ENCODE measurements at regions of chr3 and their contacts with region 1.

Region 1: DNA sequence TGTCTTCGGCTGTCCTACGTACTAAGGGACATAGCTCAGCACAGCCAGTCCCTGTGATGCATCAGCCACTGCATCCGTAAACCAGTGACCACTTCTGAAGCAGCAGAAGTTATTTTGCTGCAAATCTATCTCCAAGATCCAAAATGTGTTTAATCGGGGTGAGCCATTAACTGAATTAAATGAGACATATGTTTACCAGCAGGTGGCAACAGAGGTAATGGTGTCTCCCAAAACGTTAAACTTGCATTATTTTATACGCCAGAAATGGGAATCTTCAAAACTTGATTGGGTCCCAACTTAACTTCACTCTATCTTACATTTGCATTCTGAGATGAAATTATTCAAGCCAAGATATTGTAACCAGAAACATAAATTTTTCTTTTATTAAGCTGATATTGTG is 75.3 kb upstream of the BOC start:
- DNase-seq: peak; percentile 7
- H3K4me3 ChIP-seq: no peak overlapping the region
- H3K27ac ChIP-seq: no peak overlapping the region
- H3K4me1 ChIP-seq: no peaks in the 10 kb centered on the region
- H3K27me3 ChIP-seq: no peaks in the 10 kb centered on the region
- CTCF ChIP-seq: peak; percentile 54 to 77 (median 65)
- POLR2A ChIP-seq: no peak

Region 2: DNA sequence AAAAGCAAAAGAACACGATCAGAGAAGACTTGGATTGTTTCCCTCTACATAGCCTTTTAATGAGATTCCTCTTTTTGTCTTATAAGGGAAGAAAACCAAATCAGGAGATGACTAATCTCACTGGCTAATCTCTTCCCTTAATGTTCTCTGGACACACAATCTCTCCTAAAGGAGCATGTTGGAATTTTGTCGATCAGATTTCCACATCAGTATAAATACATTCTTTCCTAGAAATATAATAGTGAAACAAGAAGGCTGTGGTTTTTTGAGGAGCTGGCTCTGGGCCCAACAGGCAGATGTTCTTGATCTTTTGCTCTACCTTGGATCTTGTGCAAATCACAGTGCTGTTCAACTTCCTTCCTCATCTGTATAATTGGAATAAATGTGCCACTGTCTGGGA is 51.3 kb before region 1 on chr3:
- intact Hi-C with region 1: loop called (anchors 5 kb)
- DNase-seq: no peak
- H3K4me3 ChIP-seq: no peak overlapping the region
- H3K27ac ChIP-seq: no peak overlapping the region
- H3K4me1 ChIP-seq: no peaks in the 10 kb centered on the region
- H3K27me3 ChIP-seq: no peaks in the 10 kb centered on the region
- CTCF ChIP-seq: no peak
- POLR2A ChIP-seq: no peak

Region 3: DNA sequence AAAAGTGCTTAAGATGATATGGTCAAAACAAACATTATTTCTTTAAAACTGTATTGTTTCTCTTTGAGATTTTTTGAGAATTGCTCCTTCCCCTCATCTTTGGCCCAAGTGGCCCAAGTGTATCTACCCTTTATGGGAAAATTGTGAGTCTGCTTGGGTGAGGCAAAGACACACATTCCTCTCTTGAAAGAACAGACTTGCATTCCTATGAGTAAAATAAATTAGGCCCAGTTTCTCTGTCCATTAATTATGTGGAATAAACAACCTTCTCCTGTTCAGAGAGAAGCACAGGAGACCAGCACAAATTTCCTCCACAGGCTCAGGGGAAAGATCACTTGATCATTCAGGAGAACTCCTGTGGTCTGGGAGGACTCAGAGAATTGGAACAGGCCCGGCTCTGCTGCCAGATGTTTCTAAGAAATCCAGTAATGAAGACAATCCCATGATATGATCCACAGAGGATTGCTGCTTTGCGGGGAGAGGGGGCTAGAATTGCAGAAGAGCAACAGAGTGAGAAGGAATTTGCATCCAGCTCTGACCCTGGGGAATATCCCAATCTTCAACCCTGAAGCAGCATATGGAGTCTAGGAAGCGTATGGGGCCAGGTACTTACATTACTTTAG is 21.4 kb after region 1 on chr3:
- intact Hi-C with region 1: no loop called
- DNase-seq: no peak
- H3K4me3 ChIP-seq: no peak overlapping the region
- H3K27ac ChIP-seq: peak overlapping the region in 1 of 2 donors; percentile 15
- H3K4me1 ChIP-seq: no peaks in the 10 kb centered on the region
- H3K27me3 ChIP-seq: no peaks in the 10 kb centered on the region
- CTCF ChIP-seq: no peak
- POLR2A ChIP-seq: no peak

Region 4: GRCh38 chr3:113287803-113288648 is 152.0 kb after region 1 on chr3:
- intact Hi-C with region 1: loop called (anchors 2 kb)
- DNase-seq: peak; percentile 60
- H3K4me3 ChIP-seq: no peak overlapping the region
- H3K27ac ChIP-seq: peak overlapping the region; percentile 50 to 59
- H3K4me1 ChIP-seq: no peaks in the 10 kb centered on the region
- H3K27me3 ChIP-seq: no peaks in the 10 kb centered on the region
- CTCF ChIP-seq: peak; percentile 97 to 99 (median 98)
- POLR2A ChIP-seq: no peak

Region 5: GRCh38 chr3:113514265-113514769 is 378.2 kb after region 1 on chr3:
- intact Hi-C with region 1: loop called (anchors 10 kb)
- DNase-seq: no peak
- H3K4me3 ChIP-seq: peak overlapping the region; percentile 64 to 66
- H3K27ac ChIP-seq: peak overlapping the region; percentile 82 to 85
- H3K4me1 ChIP-seq: no peaks in the 10 kb centered on the region
- H3K27me3 ChIP-seq: no peaks in the 10 kb centered on the region
- CTCF ChIP-seq: no peak
- POLR2A ChIP-seq: no peak

Region 6: GRCh38 chr3:113968986-113969385 is 832.9 kb after region 1 on chr3:
- intact Hi-C with region 1: no loop called
- DNase-seq: no peak
- H3K4me3 ChIP-seq: no peak overlapping the region
- H3K27ac ChIP-seq: no peak overlapping the region
- H3K4me1 ChIP-seq: no peaks in the 10 kb centered on the region
- H3K27me3 ChIP-seq: no peaks in the 10 kb centered on the region
- CTCF ChIP-seq: no peak
- POLR2A ChIP-seq: no peak

Measured in prostate gland (tissue), 2 donors.